Ascending aorta (tissue), 2 donors: ENCODE measurements at regions of chr14 and their contacts with region 1.

Region 1: DNA sequence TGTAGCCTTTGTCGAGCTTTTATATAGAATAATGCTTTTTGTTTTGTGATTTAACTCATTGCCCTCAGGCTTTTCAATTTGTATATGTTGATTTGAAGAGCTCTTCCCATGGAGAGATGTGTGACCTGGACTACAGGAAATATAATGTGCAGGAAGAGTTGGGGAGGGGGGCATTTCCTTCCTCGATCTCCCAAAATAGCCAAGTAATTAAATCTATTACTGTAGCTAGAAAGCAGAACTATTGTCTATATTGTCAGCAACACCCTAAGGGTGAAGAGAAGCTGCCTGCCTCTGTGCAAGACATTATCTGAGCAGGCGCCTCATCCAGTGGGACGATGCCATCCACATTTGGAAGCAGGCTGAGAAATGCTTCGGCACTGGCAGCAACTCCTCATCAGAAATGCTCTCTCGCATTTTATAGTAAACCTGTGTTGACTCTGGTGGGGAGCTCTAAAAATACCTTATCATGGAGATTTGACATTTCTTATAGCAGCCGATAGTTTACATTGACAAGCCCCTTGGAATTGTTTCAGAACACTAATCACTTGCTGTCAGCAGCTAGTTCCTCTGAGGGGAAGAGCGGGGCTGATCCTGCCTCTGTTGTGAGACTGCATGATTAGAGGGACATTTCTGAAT is 392.5 kb upstream of the RGS6 start:
- DNase-seq: no peak
- H3K4me3 ChIP-seq: peak overlapping the region; percentile 13 to 50
- H3K27ac ChIP-seq: peak overlapping the region; percentile 50 to 55
- H3K4me1 ChIP-seq: peaks cover 3 to 14% of the 10 kb centered on the region in 2 donors
- H3K27me3 ChIP-seq: no peaks in the 10 kb centered on the region
- CTCF ChIP-seq: no peak

Region 2: GRCh38 chr14:71586131-71586897 is 46.5 kb after region 1 on chr14:
- intact Hi-C with region 1: loop called (anchors 5 kb)
- DNase-seq: no peak
- H3K4me3 ChIP-seq: peak overlapping the region; percentile 43 to 52
- H3K27ac ChIP-seq: peak overlapping the region; percentile 13 to 48
- H3K4me1 ChIP-seq: peaks cover 0 to 12% of the 10 kb centered on the region in 2 donors
- H3K27me3 ChIP-seq: no peaks in the 10 kb centered on the region
- CTCF ChIP-seq: no peak

Region 3: DNA sequence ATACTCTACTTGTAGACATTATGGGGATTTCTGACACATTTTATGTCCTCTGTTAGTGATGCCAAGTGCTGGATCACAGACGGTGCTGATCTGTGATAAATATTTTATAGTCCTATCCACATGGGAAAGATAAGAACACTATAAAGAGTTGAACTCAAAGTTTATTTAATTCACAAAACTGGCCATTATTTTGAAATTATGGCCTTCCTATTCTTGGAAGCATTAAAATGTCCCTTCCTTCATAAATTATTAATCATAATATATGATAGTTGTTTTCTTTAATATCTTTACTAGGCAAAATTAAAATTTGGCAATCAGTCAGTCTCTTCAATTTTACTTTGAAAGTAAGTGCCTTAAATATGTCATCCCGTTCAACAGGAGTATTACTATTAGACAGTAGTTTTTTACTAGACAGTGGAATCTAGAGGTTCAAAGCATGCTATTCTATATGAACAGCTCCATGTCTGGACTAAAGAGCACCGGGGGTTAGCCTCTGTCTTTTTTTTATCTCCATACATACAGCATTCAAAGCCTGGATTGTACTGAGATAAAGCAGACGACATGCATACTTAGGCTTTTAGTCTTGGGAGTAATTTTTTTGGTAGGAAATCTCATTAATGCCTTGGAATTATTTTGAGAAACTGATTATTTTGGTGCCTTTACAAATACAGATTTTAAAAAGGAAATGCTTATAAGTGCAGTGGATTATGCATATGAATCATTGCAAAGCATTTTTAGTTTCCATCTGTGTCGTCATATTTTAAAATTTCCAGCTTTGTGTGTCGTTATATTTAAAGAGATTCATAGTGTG is 86.3 kb after region 1 on chr14:
- intact Hi-C with region 1: no loop called
- DNase-seq: no peak
- H3K4me3 ChIP-seq: no peak overlapping the region
- H3K27ac ChIP-seq: no peak overlapping the region
- H3K4me1 ChIP-seq: no peaks in the 10 kb centered on the region
- H3K27me3 ChIP-seq: no peaks in the 10 kb centered on the region
- CTCF ChIP-seq: no peak